CD4-positive, alpha-beta memory T cell (primary cell): ENCODE measurements at regions of chr5 and their contacts with region 1.

Region 1: GRCh38 chr5:151252762-151253604 is at the start of gene GM2A:
- DNase-seq: peak; percentile 96 to 99 (median 97)
- H3K4me3 ChIP-seq: peak within 1 kb of the TSS; percentile 64 to 68
- H3K4me3 Mint-ChIP-seq: peak within 1 kb of the TSS; percentile 89 to 97 (median 94)
- H3K27ac ChIP-seq: peak within 1 kb of the TSS; percentile 66
- H3K27ac Mint-ChIP-seq: peak within 1 kb of the TSS; percentile 86 to 96 (median 94)
- H3K4me1 ChIP-seq: peaks cover 37% of the 10 kb centered on the region
- H3K4me1 Mint-ChIP-seq: peaks cover 17 to 59% (median 36%) of the 10 kb centered on the region in 4 donors
- H3K27me3 ChIP-seq: no peaks in the 10 kb centered on the region
- H3K27me3 Mint-ChIP-seq: no peaks in the 10 kb centered on the region
- total RNA-seq, gene GM2A: 20.4 to 23.1 TPM

Region 2: GRCh38 chr5:150409638-150410523 is 843.1 kb before region 1 on chr5:
- CTCF ChIA-PET with region 1: no interaction called
- POLR2A ChIA-PET with region 1: no interaction called
- intact Hi-C with region 1: loop called (anchors 2 kb)
- DNase-seq: peak in 4 of 5 donors; percentile 34 to 54 (median 48)
- H3K4me3 ChIP-seq: peak overlapping the region; percentile 34 to 78
- H3K4me3 Mint-ChIP-seq: peak overlapping the region; percentile 97 to 100 (median 99)
- H3K27ac ChIP-seq: peak overlapping the region; percentile 98
- H3K27ac Mint-ChIP-seq: peak overlapping the region; percentile 99 to 100 (median 99)
- H3K4me1 ChIP-seq: peaks cover 50% of the 10 kb centered on the region
- H3K4me1 Mint-ChIP-seq: peaks cover 26 to 57% (median 38%) of the 10 kb centered on the region in 4 donors
- H3K27me3 ChIP-seq: no peaks in the 10 kb centered on the region
- H3K27me3 Mint-ChIP-seq: no peaks in the 10 kb centered on the region

Region 3: GRCh38 chr5:150758531-150759333 is 494.3 kb before region 1 on chr5 and contains the start of gene DCTN4:
- CTCF ChIA-PET with region 1: no interaction called
- POLR2A ChIA-PET with region 1: no interaction called
- intact Hi-C with region 1: loop called (anchors 2 kb)
- DNase-seq: peak; percentile 94 to 97 (median 96)
- H3K4me3 ChIP-seq: peak within 1 kb of the TSS; percentile 78 to 88
- H3K4me3 Mint-ChIP-seq: peak within 1 kb of the TSS in 1 of 8 donors; percentile 7
- H3K27ac ChIP-seq: peak within 1 kb of the TSS; percentile 94
- H3K27ac Mint-ChIP-seq: no peak within 1 kb of the TSS
- H3K4me1 ChIP-seq: peaks cover 29% of the 10 kb centered on the region
- H3K4me1 Mint-ChIP-seq: peaks cover 24 to 36% (median 32%) of the 10 kb centered on the region in 4 donors
- H3K27me3 ChIP-seq: no peaks in the 10 kb centered on the region
- H3K27me3 Mint-ChIP-seq: no peaks in the 10 kb centered on the region
- total RNA-seq, gene DCTN4: 45.5 to 46.0 TPM

Region 4: GRCh38 chr5:151157426-151158286 is 95.3 kb before region 1 on chr5 and contains the start of gene ANXA6:
- CTCF ChIA-PET with region 1: no interaction called
- POLR2A ChIA-PET with region 1: interaction called, 11 read pairs
- intact Hi-C with region 1: loop called (anchors 2 kb)
- DNase-seq: peak; percentile 58 to 71 (median 64)
- H3K4me3 ChIP-seq: peak within 1 kb of the TSS; percentile 80 to 90
- H3K4me3 Mint-ChIP-seq: peak within 1 kb of the TSS; percentile 91 to 99 (median 97)
- H3K27ac ChIP-seq: peak within 1 kb of the TSS; percentile 84
- H3K27ac Mint-ChIP-seq: peak within 1 kb of the TSS; percentile 93 to 99 (median 97)
- H3K4me1 ChIP-seq: peaks cover 55% of the 10 kb centered on the region
- H3K4me1 Mint-ChIP-seq: peaks cover 37 to 73% (median 51%) of the 10 kb centered on the region in 4 donors
- H3K27me3 ChIP-seq: no peaks in the 10 kb centered on the region
- H3K27me3 Mint-ChIP-seq: no peaks in the 10 kb centered on the region
- total RNA-seq, gene ANXA6: 318 to 342 TPM

Region 5: DNA sequence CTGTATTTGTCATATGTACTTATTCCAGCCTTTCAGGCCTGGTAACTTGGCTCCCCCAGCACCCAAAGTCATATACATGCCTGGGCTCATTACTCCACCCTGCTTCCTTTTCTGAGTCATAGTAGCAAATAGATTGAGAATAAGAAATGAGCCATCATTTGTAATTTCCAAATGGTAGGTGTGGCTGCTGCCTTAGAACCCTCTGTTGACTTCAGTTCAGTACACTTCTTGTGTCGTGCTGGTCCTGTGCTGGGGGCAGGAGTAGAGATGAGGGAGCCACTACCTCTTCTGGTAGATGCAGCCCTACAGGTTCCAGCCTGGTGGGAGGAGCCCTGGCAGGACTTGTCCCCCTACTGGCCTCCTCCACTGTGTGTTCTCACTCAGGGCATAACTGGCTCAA is 11.1 kb after region 1 on chr5:
- CTCF ChIA-PET with region 1: no interaction called
- POLR2A ChIA-PET with region 1: no interaction called
- intact Hi-C with region 1: no loop called
- DNase-seq: no peak
- H3K4me3 ChIP-seq: no peak overlapping the region
- H3K4me3 Mint-ChIP-seq: no peak overlapping the region
- H3K27ac ChIP-seq: no peak overlapping the region
- H3K27ac Mint-ChIP-seq: peak overlapping the region in 2 of 7 donors; percentile 65 to 77
- H3K4me1 ChIP-seq: no peaks in the 10 kb centered on the region
- H3K4me1 Mint-ChIP-seq: peaks cover 0 to 4% (median 0%) of the 10 kb centered on the region in 4 donors
- H3K27me3 ChIP-seq: no peaks in the 10 kb centered on the region
- H3K27me3 Mint-ChIP-seq: no peaks in the 10 kb centered on the region

Region 6: GRCh38 chr5:151534350-151534749 is 281.4 kb after region 1 on chr5:
- CTCF ChIA-PET with region 1: no interaction called
- POLR2A ChIA-PET with region 1: no interaction called
- intact Hi-C with region 1: no loop called
- DNase-seq: no peak
- H3K4me3 ChIP-seq: no peak overlapping the region
- H3K4me3 Mint-ChIP-seq: no peak overlapping the region
- H3K27ac ChIP-seq: no peak overlapping the region
- H3K27ac Mint-ChIP-seq: no peak overlapping the region
- H3K4me1 ChIP-seq: no peaks in the 10 kb centered on the region
- H3K4me1 Mint-ChIP-seq: peaks cover 0 to 2% (median 0%) of the 10 kb centered on the region in 4 donors
- H3K27me3 ChIP-seq: no peaks in the 10 kb centered on the region
- H3K27me3 Mint-ChIP-seq: peaks cover 0 to 4% of the 10 kb centered on the region in 2 donors

Region 7: GRCh38 chr5:151758430-151759241 is 505.7 kb after region 1 on chr5 and contains the start of gene ATOX1:
- CTCF ChIA-PET with region 1: no interaction called
- POLR2A ChIA-PET with region 1: no interaction called
- intact Hi-C with region 1: loop called (anchors 5 kb)
- DNase-seq: peak; percentile 88 to 90 (median 90)
- H3K4me3 ChIP-seq: peak within 1 kb of the TSS; percentile 90 to 93
- H3K4me3 Mint-ChIP-seq: peak within 1 kb of the TSS; percentile 86 to 99 (median 91)
- H3K27ac ChIP-seq: peak within 1 kb of the TSS; percentile 85
- H3K27ac Mint-ChIP-seq: peak within 1 kb of the TSS; percentile 77 to 97 (median 95)
- H3K4me1 ChIP-seq: peaks cover 38% of the 10 kb centered on the region
- H3K4me1 Mint-ChIP-seq: peaks cover 25 to 55% (median 34%) of the 10 kb centered on the region in 4 donors
- H3K27me3 ChIP-seq: no peaks in the 10 kb centered on the region
- H3K27me3 Mint-ChIP-seq: no peaks in the 10 kb centered on the region
- total RNA-seq, gene ATOX1: 28.2 to 31.0 TPM

Region 8: GRCh38 chr5:151811593-151812321 is 558.8 kb after region 1 on chr5:
- CTCF ChIA-PET with region 1: no interaction called
- POLR2A ChIA-PET with region 1: no interaction called
- intact Hi-C with region 1: no loop called
- DNase-seq: no peak
- H3K4me3 ChIP-seq: no peak overlapping the region
- H3K4me3 Mint-ChIP-seq: no peak overlapping the region
- H3K27ac ChIP-seq: no peak overlapping the region
- H3K27ac Mint-ChIP-seq: peak overlapping the region in 2 of 7 donors; percentile 24 to 49
- H3K4me1 ChIP-seq: no peaks in the 10 kb centered on the region
- H3K4me1 Mint-ChIP-seq: peaks cover 0 to 11% (median 6%) of the 10 kb centered on the region in 4 donors
- H3K27me3 ChIP-seq: no peaks in the 10 kb centered on the region
- H3K27me3 Mint-ChIP-seq: no peaks in the 10 kb centered on the region